ENCODE measurements at regions of chr3 and their contacts with region 1.

Region 1: DNA sequence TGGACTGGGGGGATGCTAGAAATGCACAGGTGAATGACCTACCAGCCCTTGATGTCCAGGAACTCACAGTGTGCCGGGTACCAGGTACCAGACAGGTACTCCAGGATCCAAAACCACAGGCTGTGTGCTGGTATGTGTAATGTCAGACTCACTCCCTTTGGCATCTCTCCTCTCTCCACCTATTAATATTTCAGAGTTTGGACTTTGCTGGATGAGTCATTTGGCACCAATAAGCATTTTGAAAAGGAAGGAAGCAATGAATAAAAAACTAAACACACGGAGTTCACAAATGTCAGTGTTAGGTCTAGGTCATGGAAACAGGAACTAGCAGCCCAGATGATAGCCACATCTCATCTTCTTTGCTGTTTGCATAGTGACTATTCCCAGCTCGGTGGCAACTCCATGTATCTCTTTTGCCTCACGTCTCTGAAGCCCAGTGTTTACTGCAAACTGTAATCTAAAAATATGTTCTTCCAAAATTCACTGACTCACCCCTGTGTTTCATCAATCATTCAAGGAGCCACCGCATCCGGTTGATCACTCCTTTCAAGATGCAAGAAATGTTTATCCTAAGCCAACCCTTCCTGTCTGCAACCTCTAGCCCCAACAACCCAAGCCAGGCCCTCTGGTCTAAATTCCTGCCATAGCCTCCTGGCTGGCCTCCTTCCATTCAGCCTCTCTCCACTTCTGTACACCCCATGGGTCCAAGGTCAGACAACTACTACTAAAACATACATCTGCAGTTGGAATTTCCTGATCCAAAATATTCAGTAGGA is 8.4 kb downstream of the ITGB5 start:
- DNase-seq: peak; percentile 94
- H3K4me3 Mint-ChIP-seq: peak overlapping the region; percentile 32
- H3K27ac Mint-ChIP-seq: peak overlapping the region; percentile 2
- H3K4me1 Mint-ChIP-seq: peaks cover 36% of the 10 kb centered on the region
- H3K27me3 Mint-ChIP-seq: no peaks in the 10 kb centered on the region
- CTCF ChIP-seq: no peak

Region 2: GRCh38 chr3:124834723-124835718 is 43.7 kb before region 1 on chr3:
- CTCF ChIA-PET with region 1: interaction called, 3 read pairs
- POLR2A ChIA-PET with region 1: interaction called, 5 read pairs
- intact Hi-C with region 1: loop called (anchors 5 kb)
- DNase-seq: peak; percentile 87
- H3K4me3 Mint-ChIP-seq: peak overlapping the region; percentile 35
- H3K27ac Mint-ChIP-seq: peak overlapping the region; percentile 39
- H3K4me1 Mint-ChIP-seq: peaks cover 51% of the 10 kb centered on the region
- H3K27me3 Mint-ChIP-seq: no peaks in the 10 kb centered on the region
- CTCF ChIP-seq: no peak

Region 3: DNA sequence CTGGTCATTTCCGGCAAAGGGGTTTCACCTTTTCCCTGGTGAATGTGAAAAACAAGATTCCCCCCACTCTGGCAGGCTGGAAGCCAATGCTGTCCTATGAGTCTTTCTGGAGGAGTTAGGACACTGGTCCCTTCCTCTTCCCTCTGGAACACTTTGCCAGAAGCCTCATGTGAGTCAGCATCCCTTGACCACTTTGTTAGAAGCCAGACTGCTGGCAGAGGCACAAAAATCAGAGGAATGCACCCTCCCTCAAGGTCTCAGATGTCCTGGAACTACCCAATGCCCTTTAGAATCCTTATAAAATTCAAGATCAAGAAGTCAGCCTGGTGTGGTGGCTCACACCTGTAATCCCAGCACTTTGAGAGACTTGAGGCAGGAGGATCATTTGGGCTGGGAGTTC is 18.1 kb before region 1 on chr3:
- CTCF ChIA-PET with region 1: interaction called, 3 read pairs
- POLR2A ChIA-PET with region 1: no interaction called
- intact Hi-C with region 1: loop called (anchors 2 kb)
- DNase-seq: peak; percentile 97
- H3K4me3 Mint-ChIP-seq: no peak overlapping the region
- H3K27ac Mint-ChIP-seq: peak overlapping the region; percentile 91
- H3K4me1 Mint-ChIP-seq: peaks cover 19% of the 10 kb centered on the region
- H3K27me3 Mint-ChIP-seq: no peaks in the 10 kb centered on the region
- CTCF ChIP-seq: no peak

Region 4: GRCh38 chr3:124928333-124929202 is 49.8 kb after region 1 on chr3:
- CTCF ChIA-PET with region 1: no interaction called
- POLR2A ChIA-PET with region 1: no interaction called
- intact Hi-C with region 1: no loop called
- DNase-seq: peak; percentile 78
- H3K4me3 Mint-ChIP-seq: no peak overlapping the region
- H3K27ac Mint-ChIP-seq: no peak overlapping the region
- H3K4me1 Mint-ChIP-seq: peaks cover 8% of the 10 kb centered on the region
- H3K27me3 Mint-ChIP-seq: no peaks in the 10 kb centered on the region
- CTCF ChIP-seq: peak; percentile 48